Mammary epithelial cell (primary cell): ENCODE measurements at regions of chr11 and their contacts with region 1.

Region 1: DNA sequence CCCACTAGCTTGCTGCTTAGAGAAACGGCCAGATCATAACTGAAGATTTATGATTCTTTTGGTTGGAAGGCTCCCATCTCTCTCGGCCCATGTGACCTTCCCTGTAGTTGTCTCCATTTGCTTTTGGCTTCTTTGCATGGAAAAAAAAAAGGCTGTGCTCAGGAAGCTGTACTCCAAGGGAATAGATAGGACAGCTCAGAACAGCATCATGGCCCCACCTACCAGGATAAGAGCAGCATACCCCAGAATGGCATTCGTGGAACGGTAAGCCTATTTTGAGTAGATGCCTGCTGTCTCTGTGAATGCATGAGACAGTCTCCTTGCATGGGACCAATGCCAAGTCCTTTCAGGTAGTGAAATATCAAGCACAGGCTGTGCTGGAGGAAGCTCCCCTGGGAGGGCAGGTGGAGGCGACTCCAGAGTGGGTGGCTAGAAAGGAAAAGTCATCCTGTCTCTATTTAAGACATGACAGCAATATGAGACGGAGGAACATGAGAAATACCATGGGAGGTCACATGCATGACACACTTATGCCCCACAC is 94.1 kb upstream of the AMOTL1 start:
- DNase-seq: peak; percentile 51
- H3K4me3 ChIP-seq: no peak overlapping the region
- H3K27ac ChIP-seq: no peak overlapping the region
- H3K4me1 ChIP-seq: peaks cover 66% of the 10 kb centered on the region
- H3K27me3 ChIP-seq: no peaks in the 10 kb centered on the region
- CTCF ChIP-seq: no peak

Region 2: GRCh38 chr11:94629741-94630140 is 44.3 kb before region 1 on chr11:
- CTCF ChIA-PET with region 1: no interaction called
- dilution Hi-C with region 1: loop called (anchors 5 kb)
- in situ Hi-C with region 1: no loop called
- intact Hi-C with region 1: no loop called
- DNase-seq: no peak
- H3K4me3 ChIP-seq: no peak overlapping the region
- H3K27ac ChIP-seq: no peak overlapping the region
- H3K4me1 ChIP-seq: no peaks in the 10 kb centered on the region
- H3K27me3 ChIP-seq: no peaks in the 10 kb centered on the region
- CTCF ChIP-seq: no peak

Region 3: GRCh38 chr11:94767761-94768601 is 94.0 kb after region 1 on chr11 and contains the start of gene AMOTL1:
- CTCF ChIA-PET with region 1: no interaction called
- dilution Hi-C with region 1: no loop called
- in situ Hi-C with region 1: no loop called
- intact Hi-C with region 1: no loop called
- DNase-seq: peak; percentile 87
- H3K4me3 ChIP-seq: peak within 1 kb of the TSS; percentile 52 to 89 (median 64)
- H3K27ac ChIP-seq: peak within 1 kb of the TSS; percentile 91
- H3K4me1 ChIP-seq: peaks cover 47% of the 10 kb centered on the region
- H3K27me3 ChIP-seq: no peaks in the 10 kb centered on the region
- CTCF ChIP-seq: peak in 1 of 2 donors; percentile 23
- total RNA-seq, gene AMOTL1: 181 to 201 TPM

Region 4: DNA sequence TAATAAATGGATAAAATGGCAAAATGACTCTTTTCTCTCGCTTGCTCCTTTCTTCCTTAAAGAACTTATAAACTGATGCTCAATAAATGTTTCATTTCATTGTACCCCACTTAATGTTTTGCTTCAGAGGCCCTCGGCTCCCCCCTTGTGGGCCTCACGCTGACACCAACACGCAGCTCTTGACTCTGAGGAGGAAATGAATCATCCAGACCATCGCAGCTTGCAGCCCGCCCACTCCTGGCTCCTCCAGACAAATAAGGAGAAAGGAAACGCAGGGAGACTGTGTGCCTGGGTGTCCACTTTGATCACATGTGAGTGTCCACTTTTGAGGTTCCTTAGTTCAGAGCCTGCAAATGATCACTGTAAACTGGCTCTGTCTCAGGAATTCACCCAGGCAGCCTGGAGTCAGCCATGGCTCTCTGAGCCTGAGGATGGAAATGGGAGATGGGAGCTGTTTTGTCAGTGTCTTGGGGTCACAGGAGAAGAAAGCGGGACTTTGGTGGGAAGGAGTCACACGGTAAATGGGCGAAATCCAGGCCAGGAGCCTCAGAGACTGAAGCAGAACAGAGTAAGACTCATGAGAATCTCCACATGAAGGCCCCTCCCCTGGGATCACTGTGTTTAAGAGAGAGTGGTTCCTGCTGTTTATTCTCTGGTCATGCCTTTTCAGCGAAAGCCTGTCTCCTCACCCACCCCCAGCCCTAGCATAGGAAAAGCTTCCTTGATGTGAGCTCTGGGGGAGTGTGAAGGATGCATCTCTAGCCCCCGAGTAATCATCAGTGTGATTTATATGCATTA is 202.8 kb after region 1 on chr11:
- CTCF ChIA-PET with region 1: no interaction called
- dilution Hi-C with region 1: no loop called
- in situ Hi-C with region 1: no loop called
- intact Hi-C with region 1: no loop called
- DNase-seq: peak; percentile 75
- H3K4me3 ChIP-seq: no peak overlapping the region
- H3K27ac ChIP-seq: peak overlapping the region; percentile 8
- H3K4me1 ChIP-seq: peaks cover 30% of the 10 kb centered on the region
- H3K27me3 ChIP-seq: no peaks in the 10 kb centered on the region
- CTCF ChIP-seq: peak in 1 of 2 donors; percentile 28